Prostate gland (tissue), 2 donors: ENCODE measurements at regions of chr21 and their contacts with region 1.

Region 1: DNA sequence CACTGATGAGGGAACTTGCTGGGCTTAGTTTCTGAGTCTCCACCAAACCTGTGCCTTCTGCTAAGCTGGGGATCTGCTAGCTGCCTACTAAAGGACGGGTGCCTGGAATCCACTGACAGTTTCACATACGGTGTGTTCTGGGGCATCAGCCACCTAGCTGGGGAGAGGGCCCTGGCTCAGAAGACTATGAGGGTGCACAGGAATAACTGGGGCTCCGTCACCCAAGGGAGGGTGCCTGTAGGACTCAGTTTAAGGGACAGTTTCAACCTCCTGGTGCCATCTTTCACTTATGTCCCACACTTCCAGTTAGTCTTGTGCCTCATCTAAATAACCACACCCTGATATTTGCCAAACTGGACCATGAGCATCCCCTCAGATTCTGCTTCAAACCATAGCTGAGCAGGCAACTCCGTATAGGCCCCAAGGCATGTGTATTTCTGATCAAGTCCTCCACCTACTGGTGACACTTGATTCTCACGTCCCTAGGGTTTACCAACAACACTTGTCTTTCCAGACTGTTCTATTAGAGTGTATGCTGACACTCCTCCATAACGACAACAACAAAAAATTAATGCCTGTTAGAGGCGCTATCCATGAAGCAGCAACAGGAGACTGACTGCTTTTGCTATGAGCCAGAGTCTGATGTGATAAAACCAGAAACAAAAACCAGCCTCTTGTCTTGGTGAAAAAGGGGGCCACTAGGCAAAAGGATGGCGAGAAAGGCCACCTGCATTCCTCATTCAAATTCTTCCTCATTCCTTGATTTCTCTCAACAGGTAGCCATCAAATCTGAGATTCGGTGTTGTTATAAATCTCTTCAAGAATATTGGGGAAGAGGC is 55.0 kb upstream of the PAXBP1 start:
- DNase-seq: peak; percentile 21
- H3K4me3 ChIP-seq: no peak overlapping the region
- H3K27ac ChIP-seq: no peak overlapping the region
- H3K4me1 ChIP-seq: no peaks in the 10 kb centered on the region
- H3K27me3 ChIP-seq: no peaks in the 10 kb centered on the region
- CTCF ChIP-seq: peak in 3 of 4 experiments; percentile 45 to 57 (median 55)
- POLR2A ChIP-seq: no peak

Region 2: DNA sequence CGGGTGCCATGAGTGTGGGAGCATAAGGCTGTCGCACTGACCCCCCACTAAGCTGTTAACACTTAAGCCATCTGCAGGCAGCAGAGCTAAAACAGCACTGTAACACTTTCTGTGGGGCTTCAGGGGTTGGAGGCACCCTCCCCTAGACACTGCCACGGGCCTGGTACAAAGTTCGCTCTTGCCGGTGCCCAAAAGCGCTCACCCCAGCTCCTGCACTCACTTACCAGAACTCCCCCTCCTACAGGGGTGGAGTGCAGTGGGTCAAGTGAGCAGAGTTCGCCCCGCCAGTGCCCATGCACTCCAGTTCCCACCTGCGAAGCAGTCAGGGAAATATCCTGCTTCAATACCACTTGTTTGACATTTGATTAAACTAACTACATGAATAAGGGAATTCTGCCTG is 168.0 kb before region 1 on chr21:
- intact Hi-C with region 1: loop called (anchors 5 kb)
- DNase-seq: no peak
- H3K4me3 ChIP-seq: no peak overlapping the region
- H3K27ac ChIP-seq: no peak overlapping the region
- H3K4me1 ChIP-seq: no peaks in the 10 kb centered on the region
- H3K27me3 ChIP-seq: no peaks in the 10 kb centered on the region
- CTCF ChIP-seq: no peak
- POLR2A ChIP-seq: no peak

Region 3: GRCh38 chr21:32782698-32783097 is 43.9 kb before region 1 on chr21:
- intact Hi-C with region 1: loop called (anchors 2 kb)
- DNase-seq: no peak
- H3K4me3 ChIP-seq: no peak overlapping the region
- H3K27ac ChIP-seq: no peak overlapping the region
- H3K4me1 ChIP-seq: no peaks in the 10 kb centered on the region
- H3K27me3 ChIP-seq: no peaks in the 10 kb centered on the region
- CTCF ChIP-seq: no peak
- POLR2A ChIP-seq: no peak